Posterior vena cava (tissue), 2 donors: ENCODE measurements at regions of chr16 and their contacts with region 1.

Region 1: GRCh38 chr16:23029733-23030420 is 119.4 kb downstream of the USP31 start:
- DNase-seq: no peak

Region 2: DNA sequence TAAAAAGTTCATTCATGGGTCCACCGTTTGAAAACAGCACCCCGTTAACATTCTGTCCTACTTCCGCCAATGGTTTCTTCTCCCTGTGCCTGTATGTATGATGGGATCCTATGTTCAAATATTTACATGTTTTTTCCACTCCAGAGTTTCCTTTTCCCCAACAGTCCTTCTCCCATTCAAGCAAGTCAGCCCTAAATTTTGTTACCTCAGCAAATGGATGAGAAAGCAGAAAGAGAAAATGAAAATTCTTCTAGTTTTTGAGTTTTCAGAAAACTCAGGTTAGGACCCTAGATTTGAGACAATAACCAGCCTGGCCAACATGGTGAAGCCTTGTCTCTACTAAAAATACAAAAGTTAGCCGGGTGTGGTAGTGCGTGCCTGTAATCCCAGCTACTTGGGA is 686.6 kb after region 1 on chr16:
- intact Hi-C with region 1: loop called in 1 of 2 experiments (anchors 5 kb)
- DNase-seq: no peak